ENCODE measurements at regions of chr9 and their contacts with region 1.

Region 1: GRCh38 chr9:77977210-77977611 is 54.4 kb downstream of the GNAQ start:
- DNase-seq: peak; percentile 83

Region 2: GRCh38 chr9:78023003-78023741 is 46.0 kb after region 1 on chr9:
- intact Hi-C with region 1: loop called in 1 of 2 experiments (anchors 10 kb)
- DNase-seq: no peak

Measured in posterior vena cava (tissue), 2 donors.